Mammary epithelial cell (primary cell): ENCODE measurements at regions of chr18 and their contacts with region 1.

Region 1: GRCh38 chr18:23377669-23378301 is 75.3 kb upstream of the RIOK3 start:
- DNase-seq: peak; percentile 77
- H3K4me3 ChIP-seq: peak overlapping the region in 1 of 3 experiments; percentile 19
- H3K27ac ChIP-seq: peak overlapping the region; percentile 86
- H3K4me1 ChIP-seq: peaks cover 15% of the 10 kb centered on the region
- H3K27me3 ChIP-seq: no peaks in the 10 kb centered on the region
- CTCF ChIP-seq: no peak

Region 2: DNA sequence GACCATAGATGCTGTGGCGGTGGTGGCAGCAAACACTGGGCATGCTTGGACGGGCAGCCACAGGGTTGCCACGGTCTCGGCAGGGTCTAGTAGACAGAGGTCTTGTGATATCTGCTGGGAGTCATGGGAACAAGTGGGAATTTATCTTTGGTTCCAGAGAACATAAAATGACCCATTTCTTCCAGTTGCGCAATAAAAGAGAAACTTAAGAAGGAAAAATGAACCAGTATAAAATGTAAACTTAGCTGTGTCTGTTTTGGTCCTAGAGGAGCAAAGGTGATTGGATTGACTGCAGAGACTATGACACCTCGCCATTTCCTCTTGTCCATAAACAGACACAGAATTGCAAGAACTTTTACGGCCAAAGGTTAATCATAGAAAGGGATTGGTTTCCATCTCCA is 577.2 kb before region 1 on chr18:
- CTCF ChIA-PET with region 1: no interaction called
- dilution Hi-C with region 1: no loop called
- in situ Hi-C with region 1: no loop called
- intact Hi-C with region 1: loop called (anchors 1 kb)
- DNase-seq: no peak
- H3K4me3 ChIP-seq: no peak overlapping the region
- H3K27ac ChIP-seq: no peak overlapping the region
- H3K4me1 ChIP-seq: peaks cover 6% of the 10 kb centered on the region
- H3K27me3 ChIP-seq: no peaks in the 10 kb centered on the region
- CTCF ChIP-seq: no peak

Region 3: GRCh38 chr18:23032030-23032582 is 345.7 kb before region 1 on chr18:
- CTCF ChIA-PET with region 1: interaction called, 3 read pairs
- dilution Hi-C with region 1: no loop called
- in situ Hi-C with region 1: no loop called
- intact Hi-C with region 1: loop called (anchors 1 kb)
- DNase-seq: peak; percentile 76
- H3K4me3 ChIP-seq: no peak overlapping the region
- H3K27ac ChIP-seq: peak overlapping the region; percentile 75
- H3K4me1 ChIP-seq: peaks cover 26% of the 10 kb centered on the region
- H3K27me3 ChIP-seq: no peaks in the 10 kb centered on the region
- CTCF ChIP-seq: no peak

Region 4: GRCh38 chr18:23189768-23190661 is 187.8 kb before region 1 on chr18:
- CTCF ChIA-PET with region 1: no interaction called
- dilution Hi-C with region 1: no loop called
- in situ Hi-C with region 1: no loop called
- intact Hi-C with region 1: loop called (anchors 2 kb)
- DNase-seq: no peak
- H3K4me3 ChIP-seq: no peak overlapping the region
- H3K27ac ChIP-seq: no peak overlapping the region
- H3K4me1 ChIP-seq: peaks cover 16% of the 10 kb centered on the region
- H3K27me3 ChIP-seq: no peaks in the 10 kb centered on the region
- CTCF ChIP-seq: no peak

Region 5: DNA sequence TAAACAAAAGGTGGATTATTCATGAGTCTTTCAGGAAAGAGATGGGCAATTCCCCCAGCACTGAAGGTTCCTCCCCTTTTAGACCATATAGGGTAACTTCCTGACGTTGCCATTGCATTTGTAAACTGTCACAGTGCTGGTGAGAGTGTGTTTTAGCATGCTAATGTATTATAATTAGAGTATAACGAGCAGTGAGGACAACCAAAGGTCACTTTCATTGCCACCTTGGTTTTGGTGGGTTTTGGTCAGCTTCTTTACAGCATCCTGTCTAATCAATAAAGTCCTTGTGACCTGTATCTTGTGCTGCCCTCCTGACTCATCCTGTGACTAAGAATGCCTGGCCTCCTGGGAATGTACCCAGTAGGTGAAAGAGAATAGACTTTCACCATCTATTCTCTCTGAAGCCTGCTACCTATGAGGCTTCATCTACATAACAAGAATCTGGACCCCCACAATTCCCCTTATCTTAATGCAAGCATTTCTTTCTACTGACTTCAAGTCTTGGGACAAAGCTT is 93.8 kb before region 1 on chr18:
- CTCF ChIA-PET with region 1: interaction called, 5 read pairs
- dilution Hi-C with region 1: loop called (anchors 5 kb)
- in situ Hi-C with region 1: no loop called
- intact Hi-C with region 1: loop called (anchors 10 kb)
- DNase-seq: peak; percentile 93
- H3K4me3 ChIP-seq: no peak overlapping the region
- H3K27ac ChIP-seq: peak overlapping the region; percentile 58
- H3K4me1 ChIP-seq: peaks cover 33% of the 10 kb centered on the region
- H3K27me3 ChIP-seq: no peaks in the 10 kb centered on the region
- CTCF ChIP-seq: no peak

Region 6: GRCh38 chr18:23405631-23406030 is 27.8 kb after region 1 on chr18:
- CTCF ChIA-PET with region 1: no interaction called
- dilution Hi-C with region 1: no loop called
- in situ Hi-C with region 1: no loop called
- intact Hi-C with region 1: no loop called
- DNase-seq: no peak
- H3K4me3 ChIP-seq: no peak overlapping the region
- H3K27ac ChIP-seq: no peak overlapping the region
- H3K4me1 ChIP-seq: no peaks in the 10 kb centered on the region
- H3K27me3 ChIP-seq: no peaks in the 10 kb centered on the region
- CTCF ChIP-seq: no peak

Region 7: DNA sequence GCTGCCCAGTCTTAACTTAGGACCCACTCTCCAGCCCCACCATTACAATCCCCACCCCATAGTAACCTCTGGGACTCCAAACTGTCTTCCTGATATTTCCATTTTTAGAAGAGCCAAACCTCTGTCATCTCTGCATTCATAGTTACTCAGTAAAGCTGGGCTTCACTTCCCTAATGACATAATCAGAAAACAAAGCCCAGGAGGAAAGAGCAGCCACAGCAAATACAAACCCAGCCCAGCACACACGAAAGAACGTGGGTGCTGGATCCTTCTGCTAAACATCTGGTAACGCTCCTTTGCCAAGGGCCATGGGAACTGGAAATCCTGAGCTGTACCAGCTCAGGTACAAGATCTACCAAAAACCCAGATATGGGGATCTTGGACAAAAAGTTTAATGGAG is 38.5 kb after region 1 on chr18:
- CTCF ChIA-PET with region 1: interaction called, 4 read pairs
- dilution Hi-C with region 1: loop called (anchors 5 kb)
- in situ Hi-C with region 1: no loop called
- intact Hi-C with region 1: no loop called
- DNase-seq: no peak
- H3K4me3 ChIP-seq: no peak overlapping the region
- H3K27ac ChIP-seq: no peak overlapping the region
- H3K4me1 ChIP-seq: no peaks in the 10 kb centered on the region
- H3K27me3 ChIP-seq: no peaks in the 10 kb centered on the region
- CTCF ChIP-seq: no peak